Colonic mucosa (tissue), 4 donors: ENCODE measurements at regions of chr1 and their contacts with region 1.

Region 1: DNA sequence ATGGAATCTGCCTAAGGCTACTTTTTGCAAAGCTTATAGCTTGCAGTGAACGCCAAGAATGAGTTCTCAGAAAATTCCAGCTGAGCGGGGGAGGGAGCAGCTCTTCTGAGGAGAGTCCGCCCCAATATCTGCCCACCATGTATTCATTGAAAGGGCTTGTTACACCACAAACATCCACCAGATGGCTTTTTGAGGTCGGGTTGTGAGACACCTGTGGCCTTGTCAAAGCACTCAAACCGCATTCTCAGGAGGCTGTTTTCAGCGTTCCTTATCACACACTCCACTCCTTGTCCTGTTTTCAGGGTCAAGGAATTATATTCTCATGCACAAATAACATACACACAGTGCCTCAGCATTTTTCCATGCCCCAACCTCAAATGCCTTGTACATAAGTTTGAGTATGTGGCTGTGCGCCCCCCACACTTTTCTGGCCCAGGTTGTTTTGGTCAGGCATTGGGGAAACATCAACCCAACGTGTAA is 3.9 kb upstream of the C4BPB start:
- DNase-seq: peak; percentile 70
- H3K4me3 ChIP-seq: no peak overlapping the region
- H3K27ac ChIP-seq: no peak overlapping the region
- H3K4me1 ChIP-seq: no peaks in the 10 kb centered on the region
- H3K27me3 ChIP-seq: no peaks in the 10 kb centered on the region
- CTCF ChIP-seq: peak; percentile 52

Region 2: GRCh38 chr1:206955476-206956451 is 129.0 kb before region 1 on chr1:
- intact Hi-C with region 1: no loop called
- DNase-seq: peak; percentile 89
- H3K4me3 ChIP-seq: no peak overlapping the region
- H3K27ac ChIP-seq: peak overlapping the region; percentile 96
- H3K4me1 ChIP-seq: peaks cover 12% of the 10 kb centered on the region
- H3K27me3 ChIP-seq: no peaks in the 10 kb centered on the region
- CTCF ChIP-seq: no peak

Region 3: DNA sequence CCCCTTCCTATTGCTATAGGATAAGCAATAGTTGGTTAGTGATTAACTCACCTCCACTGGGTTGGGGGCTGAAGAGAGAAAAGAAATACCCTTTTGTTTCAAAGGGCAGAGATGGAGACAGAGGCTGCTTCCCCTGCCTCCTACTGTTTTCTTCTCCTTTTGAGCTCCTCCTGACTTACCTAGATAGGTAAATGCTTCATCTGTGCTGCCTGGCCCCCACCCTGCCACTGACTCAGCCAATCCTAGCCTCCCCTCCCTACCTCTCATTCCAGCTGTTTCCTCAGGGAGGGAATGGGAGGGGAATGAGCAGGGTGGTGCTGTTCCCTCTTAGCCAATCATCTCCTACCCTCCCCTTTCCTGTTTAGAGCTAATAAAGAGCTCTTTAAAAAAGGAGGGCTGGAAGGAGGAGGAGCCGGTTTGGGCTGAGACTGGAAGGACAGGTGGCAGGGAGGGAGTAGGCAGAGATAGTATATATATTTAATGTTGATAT is 52.2 kb before region 1 on chr1 and contains the start of gene C1orf116:
- intact Hi-C with region 1: loop called (anchors 10 kb)
- DNase-seq: peak; percentile 87
- H3K4me3 ChIP-seq: peak within 1 kb of the TSS; percentile 30
- H3K27ac ChIP-seq: peak within 1 kb of the TSS; percentile 89
- H3K4me1 ChIP-seq: peaks cover 9% of the 10 kb centered on the region
- H3K27me3 ChIP-seq: no peaks in the 10 kb centered on the region
- CTCF ChIP-seq: no peak
- total RNA-seq, gene C1orf116: 12.0 to 25.5 TPM

Region 4: DNA sequence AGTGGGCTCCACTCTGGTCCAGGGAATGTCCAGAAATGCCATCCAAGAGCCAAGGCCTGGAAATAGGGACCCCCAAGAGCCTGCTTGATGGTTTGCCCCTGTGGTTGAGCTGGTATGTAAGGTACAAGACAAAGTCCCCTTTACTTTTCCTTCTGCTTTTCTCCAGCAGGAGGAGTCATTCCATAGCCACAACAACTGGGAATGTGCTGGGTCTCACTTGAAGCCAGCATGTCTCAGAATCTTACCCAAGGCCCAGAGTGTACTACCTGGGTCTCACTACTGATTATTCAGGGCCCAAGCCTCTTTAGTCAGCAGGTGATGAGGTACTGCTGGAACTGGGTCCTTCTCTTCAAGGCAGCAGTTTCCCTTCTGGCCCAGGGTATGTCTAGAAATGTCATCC is 174.7 kb after region 1 on chr1:
- intact Hi-C with region 1: loop called (anchors 10 kb)
- DNase-seq: no peak
- H3K4me3 ChIP-seq: no peak overlapping the region
- H3K27ac ChIP-seq: no peak overlapping the region
- H3K4me1 ChIP-seq: no peaks in the 10 kb centered on the region
- H3K27me3 ChIP-seq: no peaks in the 10 kb centered on the region
- CTCF ChIP-seq: peak; percentile 54

Region 5: GRCh38 chr1:207321079-207321789 is 236.5 kb after region 1 on chr1 and contains the start of gene CD55:
- intact Hi-C with region 1: no loop called
- DNase-seq: peak; percentile 97
- H3K4me3 ChIP-seq: peak within 1 kb of the TSS; percentile 91
- H3K27ac ChIP-seq: peak within 1 kb of the TSS; percentile 95
- H3K4me1 ChIP-seq: peaks cover 6% of the 10 kb centered on the region
- H3K27me3 ChIP-seq: no peaks in the 10 kb centered on the region
- CTCF ChIP-seq: no peak
- total RNA-seq, gene CD55: 49.4 to 70.7 TPM

Region 6: DNA sequence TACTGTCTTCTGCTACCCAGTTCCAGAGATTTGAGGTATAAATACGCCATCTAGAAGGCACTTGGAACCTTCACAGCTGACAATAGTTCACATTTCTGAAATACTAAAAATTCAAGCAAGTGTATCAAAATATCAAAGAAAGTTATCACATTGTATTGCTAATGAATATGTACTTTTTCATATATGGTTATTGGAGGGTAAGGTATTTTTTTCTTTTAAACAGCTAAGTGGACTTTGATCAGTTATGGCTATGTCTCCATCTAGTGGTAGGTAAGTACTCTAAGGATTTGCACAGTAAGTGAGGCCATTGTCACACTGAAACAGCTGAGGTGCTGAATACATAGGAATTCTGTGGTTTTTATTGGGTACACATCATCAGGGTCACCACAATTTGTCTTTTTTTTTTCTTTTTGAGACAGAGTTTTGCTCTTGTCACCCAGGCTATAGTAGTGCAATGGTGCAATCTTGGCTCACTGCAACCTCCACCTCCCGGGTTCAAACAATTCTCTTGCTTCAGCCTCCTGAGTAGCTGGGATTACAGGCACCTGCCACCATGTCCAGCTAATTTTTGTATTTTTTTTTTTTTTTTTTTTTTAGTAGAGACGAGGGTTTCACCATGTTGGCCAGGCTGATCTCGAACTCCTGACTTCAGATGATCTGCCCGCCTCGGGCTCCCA is 320.2 kb after region 1 on chr1:
- intact Hi-C with region 1: loop called (anchors 5 kb)
- DNase-seq: no peak
- H3K4me3 ChIP-seq: no peak overlapping the region
- H3K27ac ChIP-seq: no peak overlapping the region
- H3K4me1 ChIP-seq: no peaks in the 10 kb centered on the region
- H3K27me3 ChIP-seq: no peaks in the 10 kb centered on the region
- CTCF ChIP-seq: peak; percentile 65

Region 7: DNA sequence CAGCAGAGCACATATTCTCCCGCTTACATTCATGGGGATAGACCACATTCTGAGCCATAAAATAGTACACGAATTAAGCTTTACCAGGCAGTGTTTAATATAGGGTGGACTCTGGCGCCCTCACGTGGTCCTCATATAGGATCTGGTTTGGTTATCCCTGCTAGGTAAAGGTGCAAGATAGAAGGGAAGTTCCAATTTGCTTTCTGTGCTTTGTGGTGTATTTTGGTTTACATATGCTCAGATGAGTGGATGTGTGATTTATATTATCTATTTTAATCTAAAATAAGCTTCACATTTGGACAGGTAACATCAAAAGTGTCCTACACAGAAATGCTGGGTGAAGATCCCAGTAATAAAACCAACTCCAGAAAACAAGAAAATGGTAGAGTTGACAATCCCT is 414.8 kb after region 1 on chr1:
- intact Hi-C with region 1: loop called (anchors 5 kb)
- DNase-seq: peak; percentile 58
- H3K4me3 ChIP-seq: no peak overlapping the region
- H3K27ac ChIP-seq: no peak overlapping the region
- H3K4me1 ChIP-seq: no peaks in the 10 kb centered on the region
- H3K27me3 ChIP-seq: peaks cover 9% of the 10 kb centered on the region
- CTCF ChIP-seq: peak; percentile 58